Activated B cell treated with CpG ODN at 0.5 μM for 24 hours (primary cell): ENCODE measurements at regions of chr16 and their contacts with region 1.

Region 1: DNA sequence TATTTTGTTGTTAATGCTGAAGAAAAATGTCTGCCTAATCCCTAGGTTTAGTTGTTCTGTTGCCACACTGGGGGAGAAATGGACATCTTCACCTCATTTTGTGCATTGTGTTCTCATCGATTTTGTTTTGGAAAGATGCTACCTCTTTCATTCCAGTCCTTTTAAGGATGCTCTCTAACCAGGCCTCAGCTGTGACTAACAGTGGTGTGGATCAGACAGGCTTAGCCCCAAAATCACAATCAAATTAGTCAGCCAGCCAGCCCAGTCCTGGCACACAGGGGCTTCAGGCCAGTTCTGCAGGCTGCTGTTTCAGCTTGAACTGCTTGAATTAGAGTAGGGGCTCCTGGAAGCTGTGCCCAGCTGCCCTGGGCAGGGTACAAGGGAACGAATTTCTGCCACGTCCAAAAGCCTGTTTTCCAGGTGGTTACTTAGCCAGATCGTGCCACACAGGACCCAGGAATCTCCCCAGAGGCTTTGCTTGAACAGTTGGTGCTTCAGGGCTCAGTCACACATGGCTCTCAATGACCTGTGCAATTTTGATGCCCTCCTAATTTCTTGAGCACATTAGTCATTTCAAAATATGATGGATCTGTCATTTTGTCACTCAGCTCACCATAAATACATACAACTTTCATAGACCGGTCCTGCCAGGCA is 60.7 kb downstream of the CLEC16A start:
- DNase-seq: no peak
- ATAC-seq: no peak
- H3K4me3 Mint-ChIP-seq: no peak overlapping the region
- H3K27ac Mint-ChIP-seq: no peak overlapping the region
- H3K4me1 Mint-ChIP-seq: no peaks in the 10 kb centered on the region
- H3K27me3 Mint-ChIP-seq: no peaks in the 10 kb centered on the region
- CTCF ChIP-seq: no peak

Region 2: GRCh38 chr16:10981697-10982216 is 23.3 kb before region 1 on chr16:
- CTCF ChIA-PET with region 1: no interaction called
- POLR2A ChIA-PET with region 1: no interaction called
- intact Hi-C with region 1: no loop called
- DNase-seq: peak; percentile 64
- ATAC-seq: peak; percentile 88
- H3K4me3 Mint-ChIP-seq: peak overlapping the region; percentile 69
- H3K27ac Mint-ChIP-seq: peak overlapping the region; percentile 84
- H3K4me1 Mint-ChIP-seq: peaks cover 49% of the 10 kb centered on the region
- H3K27me3 Mint-ChIP-seq: no peaks in the 10 kb centered on the region
- CTCF ChIP-seq: no peak

Region 3: GRCh38 chr16:11042006-11042590 is 37.0 kb after region 1 on chr16:
- CTCF ChIA-PET with region 1: no interaction called
- POLR2A ChIA-PET with region 1: no interaction called
- intact Hi-C with region 1: loop called (anchors 5 kb)
- DNase-seq: no peak
- ATAC-seq: no peak
- H3K4me3 Mint-ChIP-seq: no peak overlapping the region
- H3K27ac Mint-ChIP-seq: no peak overlapping the region
- H3K4me1 Mint-ChIP-seq: no peaks in the 10 kb centered on the region
- H3K27me3 Mint-ChIP-seq: no peaks in the 10 kb centered on the region
- CTCF ChIP-seq: no peak

Region 4: GRCh38 chr16:11094072-11094856 is 89.2 kb after region 1 on chr16:
- CTCF ChIA-PET with region 1: no interaction called
- POLR2A ChIA-PET with region 1: no interaction called
- intact Hi-C with region 1: no loop called
- DNase-seq: no peak
- ATAC-seq: peak; percentile 67
- H3K4me3 Mint-ChIP-seq: peak overlapping the region; percentile 68
- H3K27ac Mint-ChIP-seq: peak overlapping the region; percentile 94
- H3K4me1 Mint-ChIP-seq: peaks cover 40% of the 10 kb centered on the region
- H3K27me3 Mint-ChIP-seq: no peaks in the 10 kb centered on the region
- CTCF ChIP-seq: no peak

Region 5: DNA sequence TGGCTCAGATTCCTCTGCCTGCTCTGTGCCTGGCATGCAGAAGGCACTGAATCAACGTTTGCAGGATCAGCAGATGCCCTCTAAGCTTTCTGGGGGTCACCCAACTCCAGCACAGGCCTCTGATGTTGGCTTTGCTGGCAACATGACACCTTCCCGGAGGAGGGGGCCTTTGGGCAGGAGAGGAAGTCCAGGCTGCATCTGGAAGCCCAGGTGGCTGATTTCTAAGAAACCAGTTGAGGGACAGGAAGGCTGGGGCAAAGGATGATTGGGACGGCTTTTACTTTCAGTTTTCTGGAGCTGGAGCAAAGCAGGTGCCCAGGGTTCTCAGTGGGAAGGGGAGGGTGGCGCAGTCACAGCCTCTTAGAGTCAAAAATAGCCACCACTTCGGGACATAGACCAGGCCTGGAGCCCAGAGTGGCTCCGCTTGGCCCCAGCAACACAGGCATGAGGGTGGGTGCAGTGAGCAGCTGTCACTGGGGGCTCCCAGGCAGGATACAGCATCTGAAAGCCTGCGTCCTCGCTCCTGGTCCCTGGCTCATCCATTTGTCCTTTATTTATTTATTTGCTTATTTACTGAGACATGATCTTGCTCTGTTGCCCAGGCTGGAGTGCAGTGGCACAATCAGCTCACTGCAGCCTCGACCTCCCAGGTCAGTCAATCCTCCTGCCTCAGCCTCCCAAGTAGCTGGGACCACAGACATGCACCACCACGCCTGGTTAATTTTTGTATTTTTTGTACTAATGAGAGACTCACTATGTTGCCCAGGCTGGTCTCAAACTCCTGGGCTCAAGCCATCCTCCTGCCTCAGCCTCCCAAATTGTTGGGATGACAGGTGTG is 235.8 kb after region 1 on chr16:
- CTCF ChIA-PET with region 1: no interaction called
- POLR2A ChIA-PET with region 1: no interaction called
- intact Hi-C with region 1: no loop called
- DNase-seq: no peak
- ATAC-seq: no peak
- H3K4me3 Mint-ChIP-seq: no peak overlapping the region
- H3K27ac Mint-ChIP-seq: no peak overlapping the region
- H3K4me1 Mint-ChIP-seq: peaks cover 4% of the 10 kb centered on the region
- H3K27me3 Mint-ChIP-seq: no peaks in the 10 kb centered on the region
- CTCF ChIP-seq: no peak